Left colon (tissue), 2 donors: ENCODE measurements at regions of chr7 and their contacts with region 1.

Region 1: GRCh38 chr7:85554236-85555178 is 367.7 kb upstream of the SEMA3D start:
- DNase-seq: no peak
- ATAC-seq: no peak

Region 2: GRCh38 chr7:85030893-85031292 is 523.6 kb before region 1 on chr7:
- intact Hi-C with region 1: loop called in 1 of 2 experiments (anchors 5 kb)
- DNase-seq: no peak
- ATAC-seq: no peak